B cell (primary cell): ENCODE measurements at regions of chr3 and their contacts with region 1.

Region 1: GRCh38 chr3:12663936-12664908 is at the start of gene RAF1:
- DNase-seq: peak; percentile 98
- ATAC-seq: peak; percentile 92
- H3K4me3 ChIP-seq: peak within 1 kb of the TSS; percentile 76 to 99 (median 85)
- H3K4me3 Mint-ChIP-seq: peak within 1 kb of the TSS; percentile 99
- H3K27ac ChIP-seq: peak within 1 kb of the TSS; percentile 95 to 98
- H3K27ac Mint-ChIP-seq: peak within 1 kb of the TSS; percentile 99
- H3K4me1 ChIP-seq: peaks cover 30 to 33% of the 10 kb centered on the region in 2 donors
- H3K4me1 Mint-ChIP-seq: peaks cover 40% of the 10 kb centered on the region
- H3K27me3 ChIP-seq: no peaks in the 10 kb centered on the region
- H3K27me3 Mint-ChIP-seq: no peaks in the 10 kb centered on the region
- CTCF ChIP-seq: no peak
- total RNA-seq, gene RAF1: 126 and 135 TPM in 2 replicates

Region 2: GRCh38 chr3:12484198-12484974 is 179.8 kb before region 1 on chr3 and contains the start of gene TSEN2:
- CTCF ChIA-PET with region 1: no interaction called
- POLR2A ChIA-PET with region 1: no interaction called
- intact Hi-C with region 1: loop called (anchors 1 kb)
- DNase-seq: peak; percentile 98
- ATAC-seq: peak; percentile 94
- H3K4me3 ChIP-seq: peak within 1 kb of the TSS; percentile 75 to 88 (median 82)
- H3K4me3 Mint-ChIP-seq: peak within 1 kb of the TSS; percentile 96
- H3K27ac ChIP-seq: peak within 1 kb of the TSS; percentile 60 to 71
- H3K27ac Mint-ChIP-seq: peak within 1 kb of the TSS; percentile 90
- H3K4me1 ChIP-seq: peaks cover 14 to 29% of the 10 kb centered on the region in 2 donors
- H3K4me1 Mint-ChIP-seq: peaks cover 29% of the 10 kb centered on the region
- H3K27me3 ChIP-seq: no peaks in the 10 kb centered on the region
- H3K27me3 Mint-ChIP-seq: no peaks in the 10 kb centered on the region
- CTCF ChIP-seq: no peak
- total RNA-seq, gene TSEN2: 17.6 and 17.9 TPM in 2 replicates

Region 3: GRCh38 chr3:12706504-12707253 is 42.5 kb after region 1 on chr3:
- CTCF ChIA-PET with region 1: interaction called, 4 read pairs
- POLR2A ChIA-PET with region 1: no interaction called
- intact Hi-C with region 1: loop called (anchors 5 kb)
- DNase-seq: peak; percentile 67
- ATAC-seq: peak; percentile 97
- H3K4me3 ChIP-seq: no peak overlapping the region
- H3K4me3 Mint-ChIP-seq: no peak overlapping the region
- H3K27ac ChIP-seq: no peak overlapping the region
- H3K27ac Mint-ChIP-seq: no peak overlapping the region
- H3K4me1 ChIP-seq: no peaks in the 10 kb centered on the region
- H3K4me1 Mint-ChIP-seq: peaks cover 1% of the 10 kb centered on the region
- H3K27me3 ChIP-seq: peaks cover 0 to 7% (median 0%) of the 10 kb centered on the region in 4 experiments
- H3K27me3 Mint-ChIP-seq: peaks cover 8% of the 10 kb centered on the region
- CTCF ChIP-seq: peak; percentile 77

Region 4: GRCh38 chr3:12841149-12841970 is 177.1 kb after region 1 on chr3 and contains the start of gene RPL32:
- CTCF ChIA-PET with region 1: interaction called, 3 read pairs
- POLR2A ChIA-PET with region 1: interaction called, 6 read pairs
- intact Hi-C with region 1: loop called (anchors 1 kb)
- DNase-seq: peak; percentile 96
- ATAC-seq: peak; percentile 92
- H3K4me3 ChIP-seq: peak within 1 kb of the TSS; percentile 83 to 99 (median 90)
- H3K4me3 Mint-ChIP-seq: peak within 1 kb of the TSS; percentile 99
- H3K27ac ChIP-seq: peak within 1 kb of the TSS; percentile 96 to 97
- H3K27ac Mint-ChIP-seq: peak within 1 kb of the TSS; percentile 99
- H3K4me1 ChIP-seq: peaks cover 14 to 30% of the 10 kb centered on the region in 2 donors
- H3K4me1 Mint-ChIP-seq: peaks cover 45% of the 10 kb centered on the region
- H3K27me3 ChIP-seq: no peaks in the 10 kb centered on the region
- H3K27me3 Mint-ChIP-seq: no peaks in the 10 kb centered on the region
- CTCF ChIP-seq: peak; percentile 86
- total RNA-seq, gene RPL32: 2,575 and 2,756 TPM in 2 replicates

Region 5: GRCh38 chr3:13479581-13480339 is 815.5 kb after region 1 on chr3 and contains the start of gene HDAC11:
- CTCF ChIA-PET with region 1: no interaction called
- POLR2A ChIA-PET with region 1: no interaction called
- intact Hi-C with region 1: loop called (anchors 1 kb)
- DNase-seq: peak; percentile 97
- ATAC-seq: peak; percentile 97
- H3K4me3 ChIP-seq: peak within 1 kb of the TSS; percentile 65 to 90 (median 80)
- H3K4me3 Mint-ChIP-seq: peak within 1 kb of the TSS; percentile 92
- H3K27ac ChIP-seq: peak within 1 kb of the TSS; percentile 61 to 86
- H3K27ac Mint-ChIP-seq: peak within 1 kb of the TSS; percentile 84
- H3K4me1 ChIP-seq: peaks cover 0 to 16% of the 10 kb centered on the region in 2 donors
- H3K4me1 Mint-ChIP-seq: peaks cover 7% of the 10 kb centered on the region
- H3K27me3 ChIP-seq: no peaks in the 10 kb centered on the region
- H3K27me3 Mint-ChIP-seq: peaks cover 3% of the 10 kb centered on the region
- CTCF ChIP-seq: no peak
- total RNA-seq, gene HDAC11: 5.5 and 6.1 TPM in 2 replicates